ENCODE measurements at regions of chr13 and their contacts with region 1.

Region 1: DNA sequence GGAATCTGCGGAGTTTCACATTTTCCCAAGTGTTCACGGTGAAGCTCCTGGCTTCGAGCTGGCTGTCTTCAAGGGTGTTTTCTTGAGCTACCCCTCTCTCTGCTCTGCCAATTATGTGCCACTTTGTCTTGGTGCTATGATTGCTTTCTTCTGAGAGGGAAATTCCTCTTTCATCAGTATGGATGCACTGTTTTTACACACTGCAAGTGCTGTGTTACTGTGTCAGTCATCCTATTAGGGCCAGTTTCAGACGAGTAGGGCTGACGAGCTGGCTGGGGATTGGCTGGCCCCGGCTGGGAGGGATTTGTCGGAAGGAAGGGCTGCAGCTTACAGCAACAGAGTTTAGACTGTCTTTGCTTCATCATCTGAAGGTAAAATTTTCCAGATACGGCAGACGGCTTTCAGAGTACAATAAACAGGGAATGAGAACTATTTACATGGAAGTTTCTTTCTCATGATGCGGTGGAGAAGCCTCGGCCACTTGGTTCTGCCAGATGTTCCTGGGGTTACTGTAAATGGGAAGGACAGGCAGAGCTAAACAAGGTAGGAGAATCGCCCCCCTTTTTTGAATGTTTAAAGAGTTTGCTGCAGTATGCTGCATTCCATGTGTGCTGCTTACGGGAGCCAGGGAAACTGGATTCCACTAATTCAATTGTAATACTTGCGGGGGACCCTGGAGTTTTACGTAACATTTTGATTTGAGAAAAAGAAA is at the start of gene MBNL2:
- DNase-seq: peak; percentile 97
- H3K4me3 ChIP-seq: peak within 1 kb of the TSS; percentile 50 to 86 (median 85)
- H3K27ac ChIP-seq: peak within 1 kb of the TSS; percentile 97
- H3K4me1 ChIP-seq: peaks cover 39% of the 10 kb centered on the region
- H3K27me3 ChIP-seq: no peaks in the 10 kb centered on the region
- CTCF ChIP-seq: no peak
- total RNA-seq, gene MBNL2: 37.5 to 125 TPM

Region 2: DNA sequence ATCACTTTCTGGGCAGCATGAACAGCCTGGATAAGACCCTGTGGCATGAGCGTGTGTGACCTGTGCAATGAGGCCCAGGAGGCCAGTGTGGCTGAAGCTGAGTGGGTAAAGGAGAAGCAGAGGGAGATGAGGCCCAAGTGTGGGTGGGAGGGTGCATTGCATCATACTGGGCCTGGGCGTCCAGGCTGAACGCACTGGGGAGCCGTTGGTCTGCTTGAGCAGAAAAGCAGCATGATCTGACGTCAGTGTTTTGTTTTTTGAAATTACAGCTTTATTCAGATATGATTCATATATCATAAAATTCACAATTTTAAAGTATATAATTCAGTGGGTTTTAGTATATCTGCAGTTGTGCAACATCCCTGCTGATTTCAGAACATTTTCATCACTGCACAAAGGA is 722.5 kb before region 1 on chr13:
- CTCF ChIA-PET with region 1: no interaction called
- dilution Hi-C with region 1: no loop called
- in situ Hi-C with region 1: no loop called
- intact Hi-C with region 1: no loop called
- DNase-seq: no peak
- H3K4me3 ChIP-seq: no peak overlapping the region
- H3K27ac ChIP-seq: no peak overlapping the region
- H3K4me1 ChIP-seq: no peaks in the 10 kb centered on the region
- H3K27me3 ChIP-seq: no peaks in the 10 kb centered on the region
- CTCF ChIP-seq: no peak

Region 3: GRCh38 chr13:97124916-97125809 is 97.0 kb before region 1 on chr13:
- CTCF ChIA-PET with region 1: no interaction called
- dilution Hi-C with region 1: loop called (anchors 5 kb)
- in situ Hi-C with region 1: no loop called
- intact Hi-C with region 1: no loop called
- DNase-seq: peak; percentile 90
- H3K4me3 ChIP-seq: no peak overlapping the region
- H3K27ac ChIP-seq: peak overlapping the region; percentile 79
- H3K4me1 ChIP-seq: peaks cover 58% of the 10 kb centered on the region
- H3K27me3 ChIP-seq: no peaks in the 10 kb centered on the region
- CTCF ChIP-seq: peak in 1 of 2 donors; percentile 9

Region 4: DNA sequence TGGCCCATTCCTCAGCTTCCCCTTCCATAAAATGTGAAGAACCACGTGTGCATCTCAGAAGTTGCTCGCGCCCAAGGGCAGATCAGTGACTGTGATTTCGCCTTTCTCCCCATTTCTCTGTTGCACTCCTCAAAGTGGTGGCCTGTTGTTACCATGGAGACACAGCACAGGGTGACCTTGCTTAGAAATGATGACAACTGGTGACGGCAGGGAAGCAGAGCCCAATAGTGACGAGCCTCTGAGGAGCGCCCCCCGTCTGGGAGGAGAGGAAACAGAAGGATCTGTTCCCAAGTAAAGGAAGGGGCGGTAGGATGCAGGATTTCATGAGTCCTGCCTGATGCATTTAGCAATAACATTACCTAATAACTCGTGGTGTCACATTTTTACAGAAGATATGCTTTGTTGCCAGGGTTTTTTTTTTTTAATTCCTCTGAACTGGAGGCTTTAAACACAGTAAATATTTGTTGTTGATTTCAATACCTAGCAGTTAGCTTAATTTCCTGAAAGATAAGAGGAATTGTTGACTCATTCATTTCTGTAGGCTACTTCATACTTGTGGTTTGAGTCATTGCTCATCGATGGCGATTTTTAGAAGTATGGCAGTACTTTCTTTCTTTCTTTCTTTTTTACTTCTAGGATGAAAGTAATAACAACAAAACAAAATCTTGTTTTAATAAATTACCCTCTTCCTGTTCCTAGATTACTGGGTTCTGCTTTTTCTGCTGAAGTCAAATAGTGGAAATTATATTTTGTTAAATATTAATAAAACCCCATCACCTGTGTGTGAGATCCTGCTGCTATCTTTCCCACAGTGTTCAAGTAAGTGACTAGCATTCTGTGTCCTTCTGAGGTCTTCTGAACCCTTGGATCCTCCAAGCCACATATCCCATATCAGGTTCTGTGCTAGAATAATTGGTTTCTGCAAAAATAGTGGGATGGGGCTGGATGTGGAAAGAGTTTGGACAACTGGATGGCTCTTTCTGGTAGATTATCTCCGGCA is 36.0 kb after region 1 on chr13:
- CTCF ChIA-PET with region 1: interaction called, 10 read pairs
- dilution Hi-C with region 1: no loop called
- in situ Hi-C with region 1: no loop called
- intact Hi-C with region 1: loop called (anchors 2 kb)
- DNase-seq: peak; percentile 79
- H3K4me3 ChIP-seq: no peak overlapping the region
- H3K27ac ChIP-seq: peak overlapping the region; percentile 97
- H3K4me1 ChIP-seq: peaks cover 66% of the 10 kb centered on the region
- H3K27me3 ChIP-seq: no peaks in the 10 kb centered on the region
- CTCF ChIP-seq: no peak

Region 5: DNA sequence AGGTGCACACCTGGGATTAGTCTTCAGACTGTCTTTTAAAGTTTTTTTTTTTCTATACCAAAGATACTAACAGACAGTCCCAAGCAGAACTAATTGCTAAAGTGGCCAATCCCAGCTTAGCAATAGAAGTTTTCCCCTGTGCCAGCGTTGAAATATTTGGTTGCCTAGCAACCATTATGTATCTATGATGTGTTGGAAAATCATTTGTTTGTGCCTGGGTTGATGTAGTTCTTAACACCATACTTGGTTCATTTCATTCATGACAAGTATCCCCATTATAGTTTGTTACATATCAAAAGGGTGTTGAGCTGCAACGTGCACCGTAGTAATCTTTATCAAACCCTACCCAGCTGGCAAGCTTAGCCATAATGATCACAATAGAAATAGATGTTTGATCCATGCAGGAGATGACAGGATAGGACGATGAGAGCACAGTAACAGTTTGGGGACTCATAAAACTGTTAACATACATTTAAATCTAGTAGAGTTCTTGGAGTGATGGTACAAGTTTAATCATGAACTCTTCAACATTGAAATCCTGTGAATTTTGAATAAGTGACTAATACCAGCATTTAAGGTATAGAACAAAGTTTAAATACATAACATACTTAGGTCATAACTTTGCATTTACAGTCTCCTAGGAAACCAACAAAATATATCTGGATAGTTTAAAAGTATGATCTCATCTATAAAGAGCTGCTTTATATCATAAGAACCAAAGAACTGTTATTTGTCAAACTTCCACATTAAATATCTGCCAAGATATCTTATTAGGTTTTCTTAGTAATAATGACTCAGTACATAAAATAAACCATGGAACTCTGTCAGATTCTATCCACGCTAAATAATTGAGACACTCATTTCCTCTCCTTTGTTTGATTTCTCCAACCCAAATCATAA is 73.4 kb after region 1 on chr13:
- CTCF ChIA-PET with region 1: no interaction called
- dilution Hi-C with region 1: no loop called
- in situ Hi-C with region 1: no loop called
- intact Hi-C with region 1: loop called (anchors 1 kb)
- DNase-seq: peak; percentile 88
- H3K4me3 ChIP-seq: peak overlapping the region in 1 of 3 experiments; percentile 14
- H3K27ac ChIP-seq: peak overlapping the region; percentile 99
- H3K4me1 ChIP-seq: peaks cover 45% of the 10 kb centered on the region
- H3K27me3 ChIP-seq: no peaks in the 10 kb centered on the region
- CTCF ChIP-seq: no peak

Region 6: GRCh38 chr13:97359181-97360057 is 137.3 kb after region 1 on chr13:
- CTCF ChIA-PET with region 1: interaction called, 8 read pairs
- dilution Hi-C with region 1: no loop called
- in situ Hi-C with region 1: no loop called
- intact Hi-C with region 1: loop called (anchors 1 kb)
- DNase-seq: peak; percentile 36
- H3K4me3 ChIP-seq: no peak overlapping the region
- H3K27ac ChIP-seq: no peak overlapping the region
- H3K4me1 ChIP-seq: no peaks in the 10 kb centered on the region
- H3K27me3 ChIP-seq: no peaks in the 10 kb centered on the region
- CTCF ChIP-seq: peak; percentile 77 to 89